ENCODE measurements at regions of chr15 and their contacts with region 1.

Region 1: DNA sequence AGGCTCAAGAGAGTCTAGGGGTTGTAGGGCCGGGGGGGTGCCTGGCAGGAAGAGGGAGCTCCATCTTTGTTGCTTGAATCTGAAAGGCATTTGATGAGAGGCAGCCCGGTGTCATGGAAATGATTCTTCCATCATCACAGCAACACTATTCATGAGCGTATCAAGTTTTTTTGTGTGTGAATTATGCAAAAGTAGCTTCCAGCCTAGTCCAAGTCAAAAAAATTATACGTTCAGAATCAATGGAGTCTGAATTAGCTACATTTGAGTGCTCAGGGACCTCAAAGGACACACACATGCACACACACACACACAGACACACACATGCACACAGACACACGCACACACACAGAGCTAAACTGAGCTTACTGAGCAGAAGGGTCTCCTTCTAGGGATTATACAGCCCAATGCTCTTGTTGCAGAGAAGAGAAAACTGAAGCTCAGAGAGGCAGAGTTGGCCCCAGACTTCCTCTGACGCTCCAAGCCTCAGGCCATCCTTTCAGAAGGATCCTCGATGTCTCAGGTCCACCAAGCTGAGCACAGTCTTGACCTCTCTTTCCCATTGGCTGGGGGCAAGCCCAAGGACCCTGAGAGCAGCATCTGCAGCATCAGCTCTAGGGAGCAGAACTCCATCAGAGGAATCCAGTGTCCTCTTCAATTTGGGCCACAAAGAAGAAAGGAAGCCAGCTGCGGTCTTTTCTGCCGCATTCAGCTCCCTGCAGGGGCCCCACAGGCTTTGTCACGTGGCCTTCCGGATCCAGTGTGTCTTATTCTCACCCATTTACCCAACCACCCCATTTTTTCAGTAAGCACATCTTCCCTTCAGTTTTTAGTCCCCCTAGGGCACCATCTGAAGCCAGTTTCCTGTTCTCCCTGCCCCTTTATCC is 228.0 kb downstream of the UACA start:
- DNase-seq: peak; percentile 35 to 82 (median 77)
- ATAC-seq: peak; percentile 86
- H3K4me3 ChIP-seq: peak overlapping the region; percentile 66
- H3K4me3 Mint-ChIP-seq: peak overlapping the region; percentile 83 to 99 (median 92)
- H3K27ac ChIP-seq: peak overlapping the region; percentile 74
- H3K27ac Mint-ChIP-seq: peak overlapping the region; percentile 87 to 97 (median 95)
- H3K4me1 ChIP-seq: peaks cover 33 to 50% of the 10 kb centered on the region in 2 donors
- H3K4me1 Mint-ChIP-seq: peaks cover 44 to 87% (median 75%) of the 10 kb centered on the region in 7 donors
- H3K27me3 ChIP-seq: no peaks in the 10 kb centered on the region
- H3K27me3 Mint-ChIP-seq: peaks cover 0 to 23% (median 0%) of the 10 kb centered on the region in 5 donors

Region 2: GRCh38 chr15:70521576-70522322 is 13.6 kb before region 1 on chr15:
- CTCF ChIA-PET with region 1: interaction called, 5 read pairs
- POLR2A ChIA-PET with region 1: interaction called, 13 read pairs
- intact Hi-C with region 1: no loop called
- DNase-seq: no peak
- ATAC-seq: no peak
- H3K4me3 ChIP-seq: no peak overlapping the region
- H3K4me3 Mint-ChIP-seq: no peak overlapping the region
- H3K27ac ChIP-seq: no peak overlapping the region
- H3K27ac Mint-ChIP-seq: peak overlapping the region in 1 of 9 donors; percentile 28
- H3K4me1 ChIP-seq: peaks cover 2 to 7% of the 10 kb centered on the region in 2 donors
- H3K4me1 Mint-ChIP-seq: peaks cover 4 to 59% (median 42%) of the 10 kb centered on the region in 7 donors
- H3K27me3 ChIP-seq: no peaks in the 10 kb centered on the region
- H3K27me3 Mint-ChIP-seq: peaks cover 0 to 46% (median 0%) of the 10 kb centered on the region in 5 donors

Region 3: GRCh38 chr15:70545526-70545925 is 10.2 kb after region 1 on chr15:
- CTCF ChIA-PET with region 1: no interaction called
- POLR2A ChIA-PET with region 1: interaction called, 12 read pairs
- intact Hi-C with region 1: no loop called
- DNase-seq: no peak
- ATAC-seq: no peak
- H3K4me3 ChIP-seq: no peak overlapping the region
- H3K4me3 Mint-ChIP-seq: peak overlapping the region in 2 of 10 donors; percentile 19 to 30
- H3K27ac ChIP-seq: no peak overlapping the region
- H3K27ac Mint-ChIP-seq: peak overlapping the region in 2 of 9 donors; percentile 2 to 58
- H3K4me1 ChIP-seq: peaks cover 0 to 3% of the 10 kb centered on the region in 2 donors
- H3K4me1 Mint-ChIP-seq: peaks cover 10 to 46% (median 35%) of the 10 kb centered on the region in 7 donors
- H3K27me3 ChIP-seq: no peaks in the 10 kb centered on the region
- H3K27me3 Mint-ChIP-seq: peaks cover 0 to 20% (median 0%) of the 10 kb centered on the region in 5 donors

Region 4: DNA sequence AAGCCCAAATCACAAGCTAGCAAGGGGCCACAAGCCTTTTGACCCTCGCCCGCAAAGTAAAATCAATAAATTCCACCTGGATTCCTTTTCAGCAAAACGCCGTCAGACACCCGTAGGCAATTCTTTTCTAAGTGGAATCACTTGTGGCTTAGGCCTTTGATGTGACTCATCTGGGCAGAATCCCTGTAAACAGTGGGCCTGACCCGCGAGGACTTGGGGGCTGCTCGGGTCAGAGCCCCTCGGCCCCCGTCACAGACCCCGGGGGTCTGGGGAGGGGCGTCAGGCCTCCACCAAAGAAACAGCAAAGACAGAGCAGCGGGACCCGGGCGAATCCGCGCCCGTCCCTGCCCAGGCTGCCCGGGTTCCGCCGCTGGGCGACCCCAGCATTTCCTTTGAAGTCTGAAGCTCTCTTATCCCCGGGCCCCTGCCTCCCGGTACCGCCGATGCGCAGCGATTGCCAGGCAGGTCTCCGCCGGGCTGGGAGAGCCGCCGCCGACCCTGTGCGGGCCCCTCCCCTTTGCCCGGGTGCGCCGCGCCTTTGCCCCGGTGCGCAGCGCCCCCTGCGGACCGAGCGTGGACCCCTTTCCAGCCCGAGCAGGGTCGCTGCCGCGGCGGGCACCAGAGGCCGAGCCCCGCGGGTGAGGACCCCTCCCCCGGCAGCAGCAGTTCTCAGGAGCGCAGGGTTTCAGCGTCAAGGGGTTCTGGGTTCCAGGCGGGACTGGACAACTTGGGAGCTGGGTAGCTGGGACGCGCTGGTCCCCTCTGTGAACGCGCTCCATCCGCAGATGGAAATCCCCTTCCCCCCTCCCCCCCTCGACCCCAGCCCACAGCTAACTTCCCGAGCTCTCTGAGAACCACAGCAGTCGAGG is 49.8 kb after region 1 on chr15:
- CTCF ChIA-PET with region 1: no interaction called
- POLR2A ChIA-PET with region 1: interaction called, 5 read pairs
- intact Hi-C with region 1: loop called in 1 of 2 experiments (anchors 1 kb)
- DNase-seq: peak; percentile 35 to 66 (median 52)
- ATAC-seq: peak; percentile 88
- H3K4me3 ChIP-seq: no peak overlapping the region
- H3K4me3 Mint-ChIP-seq: peak overlapping the region in 9 of 10 donors; percentile 42 to 84 (median 71)
- H3K27ac ChIP-seq: no peak overlapping the region
- H3K27ac Mint-ChIP-seq: peak overlapping the region in 1 of 9 donors; percentile 49
- H3K4me1 ChIP-seq: peaks cover 0 to 9% of the 10 kb centered on the region in 2 donors
- H3K4me1 Mint-ChIP-seq: peaks cover 0 to 28% (median 20%) of the 10 kb centered on the region in 7 donors
- H3K27me3 ChIP-seq: no peaks in the 10 kb centered on the region
- H3K27me3 Mint-ChIP-seq: peaks cover 0 to 36% (median 17%) of the 10 kb centered on the region in 5 donors

Region 5: GRCh38 chr15:70670680-70671079 is 135.4 kb after region 1 on chr15:
- CTCF ChIA-PET with region 1: no interaction called
- POLR2A ChIA-PET with region 1: interaction called, 3 read pairs
- intact Hi-C with region 1: loop called (anchors 10 kb)
- DNase-seq: peak in 4 of 9 donors; percentile 13 to 24 (median 20)
- ATAC-seq: no peak
- H3K4me3 ChIP-seq: no peak overlapping the region
- H3K4me3 Mint-ChIP-seq: no peak overlapping the region
- H3K27ac ChIP-seq: no peak overlapping the region
- H3K27ac Mint-ChIP-seq: no peak overlapping the region
- H3K4me1 ChIP-seq: peaks cover 12 to 19% of the 10 kb centered on the region in 2 donors
- H3K4me1 Mint-ChIP-seq: peaks cover 13 to 32% (median 24%) of the 10 kb centered on the region in 7 donors
- H3K27me3 ChIP-seq: no peaks in the 10 kb centered on the region
- H3K27me3 Mint-ChIP-seq: peaks cover 0 to 29% (median 4%) of the 10 kb centered on the region in 5 donors

Region 6: DNA sequence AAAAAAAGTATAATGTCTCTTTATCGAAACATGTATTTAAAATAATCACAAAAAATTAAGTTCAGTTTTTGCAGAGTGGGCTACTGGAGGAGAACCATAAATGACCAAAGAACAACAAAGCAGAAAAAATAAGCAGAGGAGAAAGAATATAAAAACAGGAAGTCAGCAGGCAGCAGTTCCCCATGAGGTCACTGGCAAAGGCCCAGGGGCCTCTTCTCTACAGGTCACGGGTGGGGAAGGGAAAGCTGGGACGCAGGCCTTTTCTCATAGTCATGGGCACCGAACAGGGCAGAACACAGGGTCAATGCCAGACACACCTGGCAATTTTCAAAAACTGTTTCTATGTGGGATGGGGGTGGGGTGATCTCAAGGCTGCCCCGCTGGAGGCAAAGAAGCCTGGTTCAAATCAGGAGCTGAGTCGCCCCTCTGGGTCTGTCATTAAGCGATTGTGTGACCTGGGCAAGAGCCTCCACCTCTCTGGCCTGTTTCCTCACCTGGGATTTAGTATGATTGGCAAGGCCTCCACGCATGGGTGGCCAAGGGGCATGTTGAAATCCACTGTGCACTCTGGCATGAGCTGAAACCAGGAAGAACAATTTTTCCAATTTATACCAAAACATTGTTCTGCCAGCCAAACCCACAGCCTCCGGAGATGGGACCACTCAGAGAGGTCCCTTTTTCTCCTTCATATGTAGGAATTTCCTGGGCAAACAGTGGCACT is 271.8 kb after region 1 on chr15:
- CTCF ChIA-PET with region 1: no interaction called
- POLR2A ChIA-PET with region 1: no interaction called
- intact Hi-C with region 1: no loop called
- DNase-seq: no peak
- ATAC-seq: peak; percentile 59
- H3K4me3 ChIP-seq: no peak overlapping the region
- H3K4me3 Mint-ChIP-seq: no peak overlapping the region
- H3K27ac ChIP-seq: no peak overlapping the region
- H3K27ac Mint-ChIP-seq: no peak overlapping the region
- H3K4me1 ChIP-seq: no peaks in the 10 kb centered on the region
- H3K4me1 Mint-ChIP-seq: peaks cover 0 to 12% (median 8%) of the 10 kb centered on the region in 7 donors
- H3K27me3 ChIP-seq: no peaks in the 10 kb centered on the region
- H3K27me3 Mint-ChIP-seq: peaks cover 0 to 9% (median 6%) of the 10 kb centered on the region in 5 donors

Region 7: GRCh38 chr15:71203586-71204474 is 668.5 kb after region 1 on chr15:
- CTCF ChIA-PET with region 1: no interaction called
- POLR2A ChIA-PET with region 1: no interaction called
- intact Hi-C with region 1: no loop called
- DNase-seq: no peak
- ATAC-seq: no peak
- H3K4me3 ChIP-seq: no peak overlapping the region
- H3K4me3 Mint-ChIP-seq: no peak overlapping the region
- H3K27ac ChIP-seq: no peak overlapping the region
- H3K27ac Mint-ChIP-seq: no peak overlapping the region
- H3K4me1 ChIP-seq: no peaks in the 10 kb centered on the region
- H3K4me1 Mint-ChIP-seq: no peaks in the 10 kb centered on the region
- H3K27me3 ChIP-seq: no peaks in the 10 kb centered on the region
- H3K27me3 Mint-ChIP-seq: peaks cover 0 to 10% (median 0%) of the 10 kb centered on the region in 5 donors